ENCODE measurements at regions of chr4 and their contacts with region 1.

Region 1: GRCh38 chr4:18593445-18594002 is 572.0 kb upstream of the LCORL start:
- DNase-seq: peak; percentile 57
- H3K4me3 Mint-ChIP-seq: no peak overlapping the region
- H3K27ac Mint-ChIP-seq: no peak overlapping the region
- H3K4me1 Mint-ChIP-seq: peaks cover 5% of the 10 kb centered on the region
- H3K27me3 Mint-ChIP-seq: peaks cover 14% of the 10 kb centered on the region

Region 2: DNA sequence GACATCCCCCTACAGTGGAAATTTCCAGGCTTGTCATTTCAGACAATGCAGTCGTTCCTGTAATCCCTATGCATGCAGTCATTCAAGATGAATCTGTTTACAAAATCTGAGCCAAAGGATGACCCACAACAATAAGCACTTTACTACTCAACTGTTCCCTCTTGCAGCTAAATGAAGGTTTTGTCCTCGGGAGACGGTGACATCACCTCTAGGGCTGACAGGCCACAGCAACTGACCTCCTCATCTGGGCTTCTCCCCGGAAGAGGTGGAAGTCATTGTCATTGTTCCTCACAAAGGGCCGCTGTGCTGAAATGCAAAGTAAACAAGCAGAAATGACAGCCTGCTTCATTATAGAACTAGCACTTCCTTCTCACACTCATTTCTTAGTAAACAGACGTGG is 1049.3 kb before region 1 on chr4:
- CTCF ChIA-PET with region 1: interaction called, 5 read pairs
- intact Hi-C with region 1: loop called (anchors 1 kb)
- DNase-seq: no peak
- H3K4me3 Mint-ChIP-seq: no peak overlapping the region
- H3K27ac Mint-ChIP-seq: no peak overlapping the region
- H3K4me1 Mint-ChIP-seq: no peaks in the 10 kb centered on the region
- H3K27me3 Mint-ChIP-seq: peaks cover 6% of the 10 kb centered on the region

Region 3: DNA sequence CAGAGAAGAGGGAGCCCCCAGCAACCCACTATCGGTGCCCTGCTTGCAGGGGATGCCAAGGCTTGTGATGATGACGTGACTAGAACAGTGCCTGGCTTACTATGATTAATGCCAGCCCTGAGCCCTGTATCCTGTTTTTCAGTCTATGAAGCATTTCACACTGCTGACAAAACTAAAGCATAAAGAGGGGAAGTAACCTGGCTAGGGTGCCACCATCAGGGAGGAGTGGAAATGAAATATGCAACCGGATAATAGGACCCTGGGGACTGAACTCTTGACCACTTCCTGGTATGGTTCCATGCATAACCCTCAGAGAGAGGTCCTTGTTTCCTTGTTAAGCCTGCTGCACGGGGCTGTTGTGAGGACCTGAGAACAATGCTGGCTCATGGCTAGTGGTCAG is 928.8 kb before region 1 on chr4:
- CTCF ChIA-PET with region 1: no interaction called
- intact Hi-C with region 1: loop called (anchors 10 kb)
- DNase-seq: peak; percentile 15
- H3K4me3 Mint-ChIP-seq: no peak overlapping the region
- H3K27ac Mint-ChIP-seq: no peak overlapping the region
- H3K4me1 Mint-ChIP-seq: peaks cover 1% of the 10 kb centered on the region
- H3K27me3 Mint-ChIP-seq: no peaks in the 10 kb centered on the region

Region 4: GRCh38 chr4:17934286-17934685 is 659.2 kb before region 1 on chr4:
- CTCF ChIA-PET with region 1: no interaction called
- intact Hi-C with region 1: loop called (anchors 10 kb)
- DNase-seq: no peak
- H3K4me3 Mint-ChIP-seq: no peak overlapping the region
- H3K27ac Mint-ChIP-seq: no peak overlapping the region
- H3K4me1 Mint-ChIP-seq: no peaks in the 10 kb centered on the region
- H3K27me3 Mint-ChIP-seq: no peaks in the 10 kb centered on the region

Region 5: GRCh38 chr4:18075823-18076433 is 517.6 kb before region 1 on chr4:
- CTCF ChIA-PET with region 1: no interaction called
- intact Hi-C with region 1: loop called (anchors 1 kb)
- DNase-seq: peak; percentile 54
- H3K4me3 Mint-ChIP-seq: no peak overlapping the region
- H3K27ac Mint-ChIP-seq: no peak overlapping the region
- H3K4me1 Mint-ChIP-seq: peaks cover 7% of the 10 kb centered on the region
- H3K27me3 Mint-ChIP-seq: peaks cover 21% of the 10 kb centered on the region

Region 6: DNA sequence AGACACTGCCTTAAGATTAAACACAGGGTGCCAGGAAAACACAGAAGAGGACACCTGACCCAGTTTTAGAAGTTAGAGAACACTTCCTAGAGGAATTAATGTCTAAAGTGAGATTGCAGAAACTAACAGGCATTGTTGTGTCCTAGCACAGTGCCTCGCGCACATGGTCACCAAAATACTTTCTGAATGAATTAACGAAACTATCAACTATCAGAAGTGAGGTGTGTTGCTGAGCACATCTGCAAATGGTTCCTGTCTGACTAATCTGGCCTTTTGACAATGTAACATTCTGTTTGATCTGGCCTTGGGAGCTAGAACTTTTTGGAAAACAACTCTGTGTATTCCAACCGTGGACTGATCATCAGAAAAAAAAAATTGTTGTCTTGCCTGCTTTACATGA is 15.2 kb before region 1 on chr4:
- CTCF ChIA-PET with region 1: no interaction called
- intact Hi-C with region 1: no loop called
- DNase-seq: no peak
- H3K4me3 Mint-ChIP-seq: no peak overlapping the region
- H3K27ac Mint-ChIP-seq: no peak overlapping the region
- H3K4me1 Mint-ChIP-seq: no peaks in the 10 kb centered on the region
- H3K27me3 Mint-ChIP-seq: peaks cover 16% of the 10 kb centered on the region

Region 7: DNA sequence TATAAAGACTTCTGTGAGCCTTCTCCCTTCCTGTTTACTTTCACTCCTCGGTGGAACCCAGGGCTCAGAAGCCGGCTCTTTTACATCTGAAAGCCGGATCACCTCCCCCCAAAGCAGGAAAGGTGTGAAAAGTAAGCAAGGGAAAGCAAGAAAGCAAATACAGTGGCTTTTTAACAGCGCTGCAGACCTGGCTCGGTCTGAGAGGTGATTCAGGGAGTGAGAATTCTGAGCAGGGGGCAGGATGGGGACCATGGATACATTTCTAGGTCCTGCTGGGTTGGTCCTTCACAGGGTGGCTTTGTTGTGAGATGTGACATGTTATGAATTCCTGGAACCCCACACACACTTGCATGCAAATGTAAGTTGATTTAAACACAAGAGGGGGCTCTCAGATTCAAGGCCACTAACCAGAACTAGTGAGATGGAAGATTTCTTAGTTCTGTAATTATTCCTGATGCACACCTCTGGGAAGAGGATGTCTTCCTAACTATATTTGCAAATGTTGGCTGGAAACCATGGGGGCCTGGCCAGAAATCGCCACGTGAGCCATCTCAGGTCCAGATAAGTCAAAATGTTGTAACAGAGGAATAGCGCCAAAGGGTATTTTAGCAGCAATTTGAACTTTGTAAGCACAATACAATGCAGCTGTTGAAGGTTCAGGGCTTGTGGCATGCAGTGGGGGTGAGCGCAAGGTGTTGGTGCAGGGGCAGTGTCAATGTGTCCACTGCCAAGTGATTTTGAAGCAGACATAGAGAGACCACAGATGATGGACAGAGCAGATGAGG is 98.1 kb after region 1 on chr4:
- CTCF ChIA-PET with region 1: no interaction called
- intact Hi-C with region 1: no loop called
- DNase-seq: no peak
- H3K4me3 Mint-ChIP-seq: no peak overlapping the region
- H3K27ac Mint-ChIP-seq: no peak overlapping the region
- H3K4me1 Mint-ChIP-seq: no peaks in the 10 kb centered on the region
- H3K27me3 Mint-ChIP-seq: peaks cover 19% of the 10 kb centered on the region